WTC11 (cell line): ENCODE measurements at regions of chr12 and their contacts with region 1.

Region 1: DNA sequence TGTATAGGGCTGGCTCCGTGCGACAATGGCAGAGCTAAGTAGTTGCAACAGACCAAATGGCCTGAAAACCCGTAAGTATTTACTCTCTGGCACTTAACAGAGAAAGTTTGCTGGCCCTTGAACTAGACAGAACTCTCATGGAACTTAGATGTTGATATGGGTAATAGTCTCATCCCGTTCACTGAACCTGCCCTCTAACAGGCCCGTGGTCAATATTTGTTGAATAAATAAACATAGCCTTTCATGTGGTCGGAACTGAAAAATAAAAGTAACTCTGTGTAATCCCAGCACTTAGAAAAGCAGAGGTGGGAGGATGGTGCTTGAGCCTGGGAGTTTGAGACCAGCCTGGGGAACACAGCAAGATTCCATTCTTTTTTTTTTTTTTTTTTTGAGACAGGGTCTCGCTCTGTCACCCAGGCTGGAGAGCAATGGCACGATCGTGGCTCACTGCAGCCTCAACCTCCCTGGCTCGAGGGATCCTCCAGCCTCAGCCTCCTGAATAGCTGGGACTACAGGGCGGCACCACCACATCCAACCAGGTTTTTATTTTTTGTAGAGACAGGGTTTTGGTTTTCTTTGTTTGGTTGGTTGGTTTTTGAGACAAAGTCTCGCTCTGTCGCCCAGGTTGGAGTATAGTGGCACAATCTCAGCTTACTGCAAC is 29.7 kb downstream of the KDM2B start:
- DNase-seq: no peak
- ATAC-seq: no peak
- H3K4me3 Mint-ChIP-seq: no peak overlapping the region
- H3K27ac Mint-ChIP-seq: no peak overlapping the region
- H3K4me1 Mint-ChIP-seq: peaks cover 8% of the 10 kb centered on the region
- H3K27me3 Mint-ChIP-seq: no peaks in the 10 kb centered on the region
- CTCF ChIP-seq: no peak

Region 2: DNA sequence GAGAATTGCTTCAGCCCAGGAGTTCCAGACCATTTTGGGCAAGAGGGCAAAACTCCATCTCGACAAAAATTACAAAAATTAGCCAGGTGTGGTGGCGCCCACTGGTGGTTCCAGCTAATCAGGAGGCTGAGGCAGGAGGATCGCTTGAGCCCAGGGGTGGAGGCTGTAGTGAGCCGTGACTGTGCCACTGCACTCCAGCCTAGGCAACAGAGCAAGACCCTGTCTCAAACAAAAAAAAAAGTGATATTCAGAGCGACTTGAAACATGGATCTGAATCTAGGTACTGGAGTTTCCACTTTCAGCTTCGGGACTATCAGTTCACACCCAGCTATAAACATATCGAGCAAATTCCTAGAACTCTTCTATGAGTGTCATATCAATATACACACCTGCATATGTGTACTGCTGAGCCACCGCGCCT is 167.5 kb before region 1 on chr12:
- CTCF ChIA-PET with region 1: no interaction called
- POLR2A ChIA-PET with region 1: no interaction called
- DNase-seq: no peak
- ATAC-seq: no peak
- H3K4me3 Mint-ChIP-seq: no peak overlapping the region
- H3K27ac Mint-ChIP-seq: no peak overlapping the region
- H3K4me1 Mint-ChIP-seq: no peaks in the 10 kb centered on the region
- H3K27me3 Mint-ChIP-seq: no peaks in the 10 kb centered on the region; the same call in 1 of the 2 replicates
- CTCF ChIP-seq: no peak

Region 3: DNA sequence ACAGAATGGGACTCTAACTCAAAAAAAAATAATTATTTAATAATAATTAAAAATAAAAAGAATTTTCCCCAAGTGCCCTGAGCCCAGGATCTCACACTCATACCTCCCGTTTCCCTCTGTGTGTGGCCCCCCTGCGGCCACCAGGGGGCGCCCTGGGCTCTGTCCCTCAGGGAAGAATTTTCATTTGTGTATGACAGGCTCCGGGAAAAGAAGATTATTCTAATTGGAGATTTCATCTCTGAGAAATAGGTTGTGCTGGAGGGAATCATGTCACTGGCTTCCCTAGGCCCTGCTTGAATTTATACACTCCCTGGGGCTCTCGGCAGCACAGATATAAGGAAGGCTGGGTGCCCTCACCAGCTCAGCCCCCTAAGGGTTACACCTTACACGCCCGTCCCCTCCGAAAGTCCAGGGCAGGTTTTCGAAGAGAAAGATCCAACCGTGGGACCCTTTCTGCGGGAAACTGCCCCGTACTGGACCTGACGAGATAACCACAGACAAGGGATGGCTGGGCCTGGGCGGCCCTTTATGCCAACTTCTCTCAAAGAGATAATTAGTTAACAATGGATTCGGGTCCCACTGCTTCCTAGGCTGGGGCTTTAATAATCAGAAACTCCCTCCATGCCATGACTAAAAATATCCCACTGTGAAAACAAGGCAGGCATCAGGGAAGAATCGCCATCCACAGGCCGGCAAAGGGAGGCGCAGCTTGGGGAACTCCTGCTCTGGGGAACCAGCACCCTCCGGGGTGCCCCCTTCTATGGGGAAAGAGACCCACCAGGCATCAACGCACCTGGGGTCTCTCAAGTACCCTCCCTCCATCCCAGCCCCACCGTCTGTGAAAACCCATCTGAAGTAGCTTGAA is 50.9 kb before region 1 on chr12:
- CTCF ChIA-PET with region 1: interaction called, 18 read pairs
- POLR2A ChIA-PET with region 1: no interaction called
- DNase-seq: peak; percentile 79
- ATAC-seq: peak; percentile 77
- H3K4me3 Mint-ChIP-seq: no peak overlapping the region
- H3K27ac Mint-ChIP-seq: peak overlapping the region; percentile 85
- H3K4me1 Mint-ChIP-seq: peaks cover 8% of the 10 kb centered on the region
- H3K27me3 Mint-ChIP-seq: no peaks in the 10 kb centered on the region
- CTCF ChIP-seq: peak; percentile 96

Region 4: DNA sequence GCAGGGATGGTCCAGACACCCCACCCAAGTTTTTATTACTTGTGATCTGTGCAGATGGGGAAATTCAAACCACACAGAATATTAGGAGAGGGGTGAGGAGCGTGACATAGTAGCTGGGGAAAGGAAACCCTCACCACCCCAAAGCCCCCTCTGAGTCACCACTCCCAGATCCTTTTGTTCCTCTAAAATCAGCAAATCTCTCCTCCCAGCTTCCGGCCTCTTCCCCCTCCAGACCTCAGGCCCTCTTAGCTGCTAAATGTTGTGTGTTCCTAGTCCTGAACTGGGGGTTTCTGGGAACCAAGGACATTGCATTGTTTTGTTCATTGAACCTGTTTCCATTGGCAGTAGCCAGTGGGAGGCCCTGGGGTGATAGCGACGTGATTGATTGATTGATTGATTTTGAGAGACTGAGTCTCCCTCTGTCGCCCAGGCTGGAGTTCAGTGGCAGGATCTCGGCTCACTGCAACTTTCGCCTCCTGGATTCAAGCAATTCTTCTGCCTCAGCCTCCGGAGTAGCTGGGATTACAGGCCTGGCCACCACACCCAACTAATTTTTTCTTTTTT is 69.3 kb after region 1 on chr12:
- CTCF ChIA-PET with region 1: interaction called, 67 read pairs
- POLR2A ChIA-PET with region 1: interaction called, 3 read pairs
- DNase-seq: no peak
- ATAC-seq: peak; percentile 64
- H3K4me3 Mint-ChIP-seq: no peak overlapping the region
- H3K27ac Mint-ChIP-seq: peak overlapping the region; percentile 91
- H3K4me1 Mint-ChIP-seq: peaks cover 22% of the 10 kb centered on the region
- H3K27me3 Mint-ChIP-seq: no peaks in the 10 kb centered on the region
- CTCF ChIP-seq: no peak

Region 5: DNA sequence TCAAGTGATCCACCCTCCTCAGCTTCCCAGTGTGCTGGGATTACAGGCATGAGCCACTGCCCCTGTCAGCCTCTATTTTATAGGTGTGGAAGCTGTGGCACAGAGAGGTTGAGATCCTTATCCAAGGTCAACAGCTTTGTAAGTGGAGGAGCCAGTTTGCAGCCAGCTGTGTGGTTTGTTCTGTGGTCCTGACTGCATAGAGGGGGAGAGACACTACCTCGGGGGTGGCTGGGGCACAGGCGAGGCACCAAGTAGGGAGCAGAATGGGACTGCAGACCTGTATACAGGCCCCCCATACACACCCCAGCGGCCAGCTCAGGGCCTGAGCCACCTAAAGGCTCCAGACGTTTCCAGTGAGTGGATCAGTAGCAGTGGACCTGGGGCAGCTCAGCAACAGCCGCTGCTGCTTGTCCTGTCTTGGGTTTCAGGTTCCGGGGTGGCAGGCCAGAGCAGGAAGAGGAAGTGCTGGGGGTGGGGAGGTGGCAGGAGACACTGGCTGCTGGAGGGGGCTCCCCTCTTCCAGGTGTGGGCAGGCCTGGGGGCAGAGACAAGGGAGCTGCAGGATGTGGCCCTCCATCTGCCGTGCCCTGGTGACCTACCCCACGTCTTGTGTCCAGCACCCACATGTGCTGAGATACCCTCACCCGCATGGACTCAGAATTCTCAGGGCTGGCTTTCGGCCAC is 86.3 kb after region 1 on chr12:
- CTCF ChIA-PET with region 1: interaction called, 15 read pairs
- POLR2A ChIA-PET with region 1: no interaction called
- DNase-seq: no peak
- ATAC-seq: peak; percentile 16; the same call in 1 of the 2 replicates
- H3K4me3 Mint-ChIP-seq: no peak overlapping the region
- H3K27ac Mint-ChIP-seq: peak overlapping the region; percentile 60; the same call in 1 of the 2 replicates
- H3K4me1 Mint-ChIP-seq: peaks cover 29% of the 10 kb centered on the region
- H3K27me3 Mint-ChIP-seq: no peaks in the 10 kb centered on the region
- CTCF ChIP-seq: no peak

Region 6: DNA sequence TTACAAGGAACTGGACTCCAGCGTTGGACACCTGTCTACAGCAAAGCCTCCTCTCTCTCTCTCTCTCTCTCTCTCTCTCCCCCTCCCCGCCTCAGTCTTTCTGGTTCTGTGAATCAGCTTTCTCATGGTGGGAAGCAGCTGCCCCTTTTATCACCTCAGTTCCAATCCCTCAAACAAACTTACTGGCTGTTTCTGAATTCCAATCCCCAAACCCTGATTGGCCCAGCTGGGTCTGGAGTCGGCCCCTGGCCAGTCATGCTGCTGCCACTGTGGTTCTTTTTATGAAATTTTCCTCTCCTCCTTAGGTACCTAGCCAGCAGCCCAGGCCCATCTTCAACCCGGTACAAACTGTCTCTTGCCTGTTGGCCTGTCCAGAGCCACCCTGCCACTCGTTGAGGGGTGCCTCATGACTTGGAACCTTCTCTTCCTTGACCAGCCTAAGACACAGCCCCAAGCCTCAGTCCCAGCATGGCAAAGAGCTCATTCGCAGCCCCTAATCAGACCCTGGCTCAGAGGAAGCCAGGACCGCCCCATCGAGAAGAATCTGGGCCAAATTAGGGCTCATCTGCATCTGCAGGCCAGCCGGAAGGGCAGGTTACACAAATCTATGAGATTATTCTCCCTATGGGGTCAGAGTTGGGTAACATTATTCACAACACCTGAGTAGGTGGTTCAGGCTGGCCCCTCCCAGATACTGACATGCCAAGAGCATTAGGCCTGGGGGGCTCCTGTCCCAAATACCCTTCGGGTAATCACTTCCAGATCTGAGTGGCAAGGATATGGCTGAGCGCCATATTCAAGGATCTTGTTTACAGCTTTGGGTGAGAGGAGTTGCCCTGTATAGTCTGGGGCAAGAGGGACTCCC is 127.8 kb after region 1 on chr12:
- CTCF ChIA-PET with region 1: interaction called, 22 read pairs
- POLR2A ChIA-PET with region 1: no interaction called
- DNase-seq: no peak
- ATAC-seq: peak; percentile 45
- H3K4me3 Mint-ChIP-seq: no peak overlapping the region
- H3K27ac Mint-ChIP-seq: peak overlapping the region; percentile 69; the same call in 1 of the 2 replicates
- H3K4me1 Mint-ChIP-seq: peaks cover 17% of the 10 kb centered on the region
- H3K27me3 Mint-ChIP-seq: no peaks in the 10 kb centered on the region
- CTCF ChIP-seq: no peak

Region 7: DNA sequence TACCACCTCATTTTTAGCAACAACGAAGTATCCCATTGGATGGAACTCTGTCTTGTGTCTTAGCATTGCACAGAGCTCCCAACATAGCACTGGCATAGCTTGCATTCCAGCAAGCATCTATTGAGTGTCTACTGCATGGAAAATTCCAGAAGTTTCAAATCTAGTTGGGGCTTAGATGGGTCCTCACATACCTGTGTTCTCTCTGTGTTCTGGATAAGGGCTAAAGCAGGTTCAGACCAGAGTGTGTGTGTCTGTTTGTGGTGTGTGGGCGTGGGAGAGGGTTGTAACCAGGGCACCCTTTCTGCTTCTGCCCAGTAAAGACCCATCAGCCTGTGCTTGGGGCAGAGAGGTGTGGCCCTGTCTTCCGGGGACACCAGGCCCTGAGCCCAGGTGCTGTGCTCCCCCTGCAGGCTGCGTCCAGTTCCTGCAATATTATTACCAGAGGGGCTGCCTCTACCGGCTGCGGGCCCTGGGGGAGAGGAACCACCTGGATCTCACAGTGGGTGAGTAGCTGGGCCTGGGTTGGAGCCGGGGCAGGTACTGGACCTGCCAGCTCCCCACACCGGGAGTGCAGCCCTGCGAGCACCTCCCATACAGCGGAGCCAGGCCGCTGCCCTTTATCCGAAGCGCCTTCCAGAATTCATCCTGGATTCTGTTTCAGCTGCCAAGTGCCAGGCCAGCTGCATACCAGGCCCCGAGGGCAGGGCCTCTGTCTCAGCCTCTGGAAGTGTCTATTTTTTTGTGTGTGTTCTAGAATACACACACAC is 222.1 kb after region 1 on chr12:
- CTCF ChIA-PET with region 1: interaction called, 10 read pairs
- POLR2A ChIA-PET with region 1: no interaction called
- DNase-seq: peak; percentile 88
- ATAC-seq: peak; percentile 77
- H3K4me3 Mint-ChIP-seq: no peak overlapping the region
- H3K27ac Mint-ChIP-seq: peak overlapping the region; percentile 72
- H3K4me1 Mint-ChIP-seq: peaks cover 16% of the 10 kb centered on the region
- H3K27me3 Mint-ChIP-seq: no peaks in the 10 kb centered on the region
- CTCF ChIP-seq: peak; percentile 77